CD4-positive, alpha-beta memory T cell (primary cell): ENCODE measurements at regions of chr14 and their contacts with region 1.

Region 1: GRCh38 chr14:22570132-22570949 is 18.7 kb downstream of the DAD1 start:
- DNase-seq: peak; percentile 94 to 97 (median 96)
- H3K4me3 ChIP-seq: peak overlapping the region; percentile 6 to 41
- H3K4me3 Mint-ChIP-seq: peak overlapping the region; percentile 54 to 85 (median 80)
- H3K27ac ChIP-seq: peak overlapping the region; percentile 69
- H3K27ac Mint-ChIP-seq: peak overlapping the region; percentile 95 to 100 (median 98)
- H3K4me1 ChIP-seq: peaks cover 52% of the 10 kb centered on the region
- H3K4me1 Mint-ChIP-seq: peaks cover 38 to 57% (median 46%) of the 10 kb centered on the region in 4 donors
- H3K27me3 ChIP-seq: no peaks in the 10 kb centered on the region
- H3K27me3 Mint-ChIP-seq: no peaks in the 10 kb centered on the region

Region 2: GRCh38 chr14:21917699-21918436 is 652.5 kb before region 1 on chr14:
- CTCF ChIA-PET with region 1: interaction called, 22 read pairs
- POLR2A ChIA-PET with region 1: interaction called, 11 read pairs
- intact Hi-C with region 1: loop called (anchors 1 kb)
- DNase-seq: peak; percentile 52 to 63 (median 60)
- H3K4me3 ChIP-seq: peak overlapping the region in 1 of 2 donors; percentile 0
- H3K4me3 Mint-ChIP-seq: peak overlapping the region; percentile 55 to 86 (median 82)
- H3K27ac ChIP-seq: peak overlapping the region; percentile 35
- H3K27ac Mint-ChIP-seq: peak overlapping the region; percentile 44 to 95 (median 58)
- H3K4me1 ChIP-seq: peaks cover 64% of the 10 kb centered on the region
- H3K4me1 Mint-ChIP-seq: peaks cover 18 to 65% (median 38%) of the 10 kb centered on the region in 4 donors
- H3K27me3 ChIP-seq: no peaks in the 10 kb centered on the region
- H3K27me3 Mint-ChIP-seq: no peaks in the 10 kb centered on the region

Region 3: DNA sequence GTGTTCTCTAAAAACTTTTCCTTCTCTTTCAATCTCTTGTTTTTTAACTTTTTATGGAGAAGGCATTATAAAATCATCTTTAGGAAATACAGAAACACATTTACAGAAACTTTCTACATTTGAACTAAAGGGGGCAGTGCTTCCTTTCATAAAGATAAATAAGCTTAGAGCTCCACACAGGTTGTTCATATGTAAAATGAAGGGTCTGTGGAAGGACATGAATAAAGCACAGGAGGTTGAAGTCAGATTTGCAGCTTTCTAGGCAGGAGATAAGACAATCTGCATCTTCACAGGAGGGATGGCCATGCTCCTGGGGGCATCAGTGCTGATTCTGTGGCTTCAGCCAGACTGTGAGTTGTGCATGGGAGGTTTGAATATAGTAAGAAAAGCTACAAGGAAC is 407.3 kb before region 1 on chr14:
- CTCF ChIA-PET with region 1: interaction called, 8 read pairs
- POLR2A ChIA-PET with region 1: interaction called, 11 read pairs
- intact Hi-C with region 1: no loop called
- DNase-seq: peak in 2 of 5 donors; percentile 10 to 21
- H3K4me3 ChIP-seq: no peak overlapping the region
- H3K4me3 Mint-ChIP-seq: peak overlapping the region; percentile 77 to 89 (median 86)
- H3K27ac ChIP-seq: no peak overlapping the region
- H3K27ac Mint-ChIP-seq: peak overlapping the region; percentile 35 to 89 (median 81)
- H3K4me1 ChIP-seq: no peaks in the 10 kb centered on the region
- H3K4me1 Mint-ChIP-seq: peaks cover 0 to 12% (median 3%) of the 10 kb centered on the region in 4 donors
- H3K27me3 ChIP-seq: no peaks in the 10 kb centered on the region
- H3K27me3 Mint-ChIP-seq: no peaks in the 10 kb centered on the region

Region 4: DNA sequence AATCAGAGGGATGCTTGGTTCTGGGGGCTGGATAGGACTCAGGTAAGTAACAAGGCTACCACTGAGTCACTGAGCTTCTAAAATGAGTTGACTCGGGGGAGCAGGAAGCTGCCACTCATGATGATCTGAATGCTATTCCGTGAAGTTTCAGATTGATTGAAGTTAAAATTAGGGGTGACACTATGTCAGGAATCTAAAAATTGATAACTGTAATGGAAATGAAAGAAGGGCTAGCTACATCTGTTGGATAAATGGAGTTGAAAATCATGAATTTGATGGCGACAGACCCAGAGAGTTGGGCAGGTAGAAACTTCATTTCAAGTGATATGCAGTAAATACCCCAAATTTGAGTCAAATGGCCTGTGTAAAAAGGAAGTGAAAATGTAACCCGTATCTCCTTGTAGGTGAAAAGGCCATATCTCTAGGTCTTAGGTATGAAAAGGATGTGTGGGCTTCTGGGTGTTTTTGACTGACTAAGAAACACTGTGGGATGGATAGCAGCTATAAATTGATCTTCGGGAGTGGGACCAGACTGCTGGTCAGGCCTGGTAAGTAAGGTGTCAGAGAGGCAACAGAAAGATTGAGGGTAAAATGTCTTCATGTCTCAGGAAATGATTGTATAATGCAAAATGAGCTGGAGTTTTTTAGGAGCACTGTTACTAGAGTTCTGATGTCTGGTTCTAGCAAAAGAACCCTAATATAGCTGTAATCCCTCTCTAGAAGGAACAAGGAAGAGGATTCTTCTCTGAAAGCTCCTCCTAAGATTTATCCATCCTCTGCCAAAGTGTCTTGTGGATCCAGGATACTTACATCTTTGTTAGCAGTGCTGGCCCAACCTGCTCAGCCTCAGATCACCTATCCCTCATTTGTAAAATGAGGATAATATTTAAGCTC is 38.6 kb before region 1 on chr14:
- CTCF ChIA-PET with region 1: interaction called, 30 read pairs
- POLR2A ChIA-PET with region 1: interaction called, 186 read pairs
- intact Hi-C with region 1: no loop called
- DNase-seq: peak in 2 of 5 donors; percentile 51 to 65
- H3K4me3 ChIP-seq: peak overlapping the region; percentile 44 to 49
- H3K4me3 Mint-ChIP-seq: peak overlapping the region; percentile 84 to 91 (median 90)
- H3K27ac ChIP-seq: peak overlapping the region; percentile 58
- H3K27ac Mint-ChIP-seq: peak overlapping the region; percentile 92 to 100 (median 97)
- H3K4me1 ChIP-seq: peaks cover 96% of the 10 kb centered on the region
- H3K4me1 Mint-ChIP-seq: peaks cover 78 to 99% (median 86%) of the 10 kb centered on the region in 4 donors
- H3K27me3 ChIP-seq: no peaks in the 10 kb centered on the region
- H3K27me3 Mint-ChIP-seq: no peaks in the 10 kb centered on the region

Region 5: GRCh38 chr14:22653012-22653621 is 82.8 kb after region 1 on chr14:
- CTCF ChIA-PET with region 1: interaction called, 76 read pairs
- POLR2A ChIA-PET with region 1: interaction called, 27 read pairs
- intact Hi-C with region 1: loop called (anchors 1 kb)
- DNase-seq: peak; percentile 35 to 48 (median 43)
- H3K4me3 ChIP-seq: no peak overlapping the region
- H3K4me3 Mint-ChIP-seq: no peak overlapping the region
- H3K27ac ChIP-seq: no peak overlapping the region
- H3K27ac Mint-ChIP-seq: peak overlapping the region in 1 of 7 donors; percentile 10
- H3K4me1 ChIP-seq: no peaks in the 10 kb centered on the region
- H3K4me1 Mint-ChIP-seq: no peaks in the 10 kb centered on the region
- H3K27me3 ChIP-seq: no peaks in the 10 kb centered on the region
- H3K27me3 Mint-ChIP-seq: no peaks in the 10 kb centered on the region

Region 6: GRCh38 chr14:22872033-22872832 is 301.9 kb after region 1 on chr14:
- CTCF ChIA-PET with region 1: interaction called, 16 read pairs
- POLR2A ChIA-PET with region 1: interaction called, 12 read pairs
- intact Hi-C with region 1: loop called (anchors 5 kb)
- DNase-seq: peak; percentile 66 to 78 (median 73)
- H3K4me3 ChIP-seq: peak overlapping the region; percentile 24 to 55
- H3K4me3 Mint-ChIP-seq: peak overlapping the region; percentile 88 to 98 (median 97)
- H3K27ac ChIP-seq: peak overlapping the region; percentile 79
- H3K27ac Mint-ChIP-seq: peak overlapping the region; percentile 72 to 100 (median 89)
- H3K4me1 ChIP-seq: peaks cover 48% of the 10 kb centered on the region
- H3K4me1 Mint-ChIP-seq: peaks cover 17 to 46% (median 33%) of the 10 kb centered on the region in 4 donors
- H3K27me3 ChIP-seq: no peaks in the 10 kb centered on the region
- H3K27me3 Mint-ChIP-seq: no peaks in the 10 kb centered on the region

Region 7: GRCh38 chr14:23057757-23058653 is 487.7 kb after region 1 on chr14:
- CTCF ChIA-PET with region 1: interaction called, 14 read pairs
- POLR2A ChIA-PET with region 1: interaction called, 6 read pairs
- intact Hi-C with region 1: loop called (anchors 2 kb)
- DNase-seq: peak; percentile 80 to 84 (median 82)
- H3K4me3 ChIP-seq: peak overlapping the region; percentile 36 to 89
- H3K4me3 Mint-ChIP-seq: peak overlapping the region; percentile 84 to 91 (median 88)
- H3K27ac ChIP-seq: peak overlapping the region; percentile 36
- H3K27ac Mint-ChIP-seq: peak overlapping the region in 6 of 7 donors; percentile 60 to 83 (median 82)
- H3K4me1 ChIP-seq: peaks cover 17% of the 10 kb centered on the region
- H3K4me1 Mint-ChIP-seq: peaks cover 11 to 21% (median 15%) of the 10 kb centered on the region in 4 donors
- H3K27me3 ChIP-seq: no peaks in the 10 kb centered on the region
- H3K27me3 Mint-ChIP-seq: peaks cover 0 to 1% of the 10 kb centered on the region in 2 donors